Dorsolateral prefrontal cortex (tissue), 120 donors: ENCODE measurements at regions of chr1 and their contacts with region 1.

Region 1: GRCh38 chr1:40040511-40041465 is at the start of gene CAP1:
- DNase-seq: peak; percentile 96 to 100 (median 99)
- H3K4me3 ChIP-seq: peak within 1 kb of the TSS; percentile 77 to 100 (median 97)
- H3K27ac ChIP-seq: peak within 1 kb of the TSS; percentile 41 to 99 (median 94)
- H3K27me3 ChIP-seq: no peaks in the 10 kb centered on the region
- CTCF ChIP-seq: peak in 38 of 56 donors; percentile 7 to 58 (median 31)
- total RNA-seq, gene CAP1: 108 to 214 (median 152) TPM

Region 2: GRCh38 chr1:39816415-39817090 is 224.2 kb before region 1 on chr1:
- intact Hi-C with region 1: no loop called
- DNase-seq: peak in 9 of 10 donors; percentile 46 to 78 (median 64)
- H3K4me3 ChIP-seq: no peak overlapping the region
- H3K27ac ChIP-seq: no peak overlapping the region
- H3K27me3 ChIP-seq: no peaks in the 10 kb centered on the region
- CTCF ChIP-seq: peak; percentile 59 to 91 (median 84)

Region 3: DNA sequence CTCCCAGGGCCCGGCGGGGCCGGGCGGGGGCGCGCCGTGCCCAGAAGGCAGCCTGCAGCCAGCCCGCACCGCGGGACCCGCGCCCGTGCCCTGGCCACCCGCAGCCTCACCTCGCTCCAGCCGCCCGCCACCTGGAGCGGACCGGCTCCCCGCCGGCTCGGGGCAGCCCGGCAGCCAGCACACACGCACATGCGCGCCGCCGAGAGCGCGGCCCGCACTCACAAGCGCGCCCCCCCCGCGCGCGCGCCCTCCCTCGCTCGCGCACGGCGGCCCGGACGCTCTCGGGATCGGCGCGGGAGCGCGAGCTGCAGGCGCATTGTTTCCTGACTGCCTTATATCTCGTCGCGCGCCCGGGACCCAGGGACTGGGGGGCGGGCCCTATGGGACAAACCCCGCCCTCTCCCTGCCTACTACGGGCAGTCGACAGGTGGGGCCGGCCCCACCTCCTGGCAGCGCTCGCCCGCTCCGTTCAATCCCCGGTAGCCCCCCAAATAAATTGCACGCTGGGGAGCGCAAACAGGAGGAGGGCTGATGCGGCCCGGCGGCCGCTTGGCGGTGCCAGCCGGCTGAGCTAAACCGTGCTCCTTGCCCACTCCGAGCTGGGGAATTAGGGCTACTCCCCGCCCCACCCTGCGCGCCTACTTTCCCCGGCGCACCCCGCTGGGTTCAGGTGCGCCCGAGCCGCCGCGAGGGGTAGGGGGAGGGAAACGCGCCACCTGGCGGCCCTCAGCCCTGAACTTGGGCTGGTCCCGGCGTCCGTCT is 138.9 kb before region 1 on chr1 and contains the start of gene MYCL:
- intact Hi-C with region 1: loop called (anchors 10 kb)
- DNase-seq: peak; percentile 59 to 82 (median 78)
- H3K4me3 ChIP-seq: peak within 1 kb of the TSS; percentile 57 to 88 (median 75)
- H3K27ac ChIP-seq: peak within 1 kb of the TSS in 31 of 59 donors; percentile 0 to 78 (median 42)
- H3K27me3 ChIP-seq: no peaks in the 10 kb centered on the region
- CTCF ChIP-seq: peak in 55 of 56 donors; percentile 45 to 86 (median 70)
- total RNA-seq, gene MYCL: 0.88 to 5.6 (median 2.3) TPM

Region 4: DNA sequence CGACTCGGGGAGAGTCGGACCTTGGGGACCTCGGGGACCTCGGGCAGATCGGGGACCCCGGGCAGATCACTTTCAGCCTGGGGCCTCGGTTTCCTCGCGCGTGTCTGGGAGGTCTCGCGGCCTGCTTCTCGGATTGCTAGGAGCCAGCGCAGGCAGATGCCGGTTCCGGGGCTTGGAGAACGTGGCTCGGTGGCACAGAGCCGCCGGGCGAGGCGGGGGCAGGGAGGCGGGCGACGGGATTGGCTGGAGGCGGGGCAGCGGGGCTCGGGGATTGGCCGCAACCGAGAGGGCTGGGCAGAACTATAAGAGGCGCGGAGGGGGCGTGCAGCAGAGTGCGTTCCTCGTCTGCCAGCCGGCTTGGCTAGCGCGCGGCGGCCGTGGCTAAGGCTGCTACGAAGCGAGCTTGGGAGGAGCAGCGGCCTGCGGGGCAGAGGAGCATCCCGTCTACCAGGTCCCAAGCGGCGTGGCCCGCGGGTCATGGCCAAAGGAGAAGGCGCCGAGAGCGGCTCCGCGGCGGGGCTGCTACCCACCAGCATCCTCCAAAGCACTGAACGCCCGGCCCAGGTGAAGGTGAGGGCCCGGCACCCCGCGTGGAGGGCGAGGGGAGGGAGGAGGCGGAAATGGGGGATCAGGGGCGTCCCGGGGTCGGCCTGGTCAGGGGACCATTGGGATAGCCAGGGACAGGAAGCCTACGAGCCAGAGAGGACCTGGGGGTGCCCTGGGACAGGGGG is 85.8 kb before region 1 on chr1 and contains the start of gene MFSD2A:
- intact Hi-C with region 1: loop called in 1 of 2 experiments (anchors 10 kb)
- DNase-seq: peak; percentile 88 to 98 (median 94)
- H3K4me3 ChIP-seq: peak within 1 kb of the TSS; percentile 47 to 90 (median 72)
- H3K27ac ChIP-seq: peak within 1 kb of the TSS in 56 of 59 donors; percentile 31 to 93 (median 75)
- H3K27me3 ChIP-seq: no peaks in the 10 kb centered on the region
- CTCF ChIP-seq: peak in 7 of 56 donors; percentile 10 to 43 (median 16)
- total RNA-seq, gene MFSD2A: 6.7 to 62.3 (median 20.8) TPM

Region 5: GRCh38 chr1:40096977-40097782 is 56.4 kb after region 1 on chr1 and contains the start of gene PPT1:
- intact Hi-C with region 1: loop called (anchors 2 to 5 kb)
- DNase-seq: peak; percentile 79 to 92 (median 87)
- H3K4me3 ChIP-seq: peak within 1 kb of the TSS; percentile 58 to 97 (median 81)
- H3K27ac ChIP-seq: peak within 1 kb of the TSS; percentile 66 to 97 (median 85)
- H3K27me3 ChIP-seq: no peaks in the 10 kb centered on the region
- CTCF ChIP-seq: peak in 52 of 56 donors; percentile 7 to 66 (median 40)
- total RNA-seq, gene PPT1: 72.4 to 166 (median 118) TPM

Region 6: GRCh38 chr1:40224040-40224439 is 183.3 kb after region 1 on chr1:
- intact Hi-C with region 1: no loop called
- DNase-seq: no peak
- H3K4me3 ChIP-seq: no peak overlapping the region
- H3K27ac ChIP-seq: no peak overlapping the region
- H3K27me3 ChIP-seq: no peaks in the 10 kb centered on the region
- CTCF ChIP-seq: no peak

Region 7: DNA sequence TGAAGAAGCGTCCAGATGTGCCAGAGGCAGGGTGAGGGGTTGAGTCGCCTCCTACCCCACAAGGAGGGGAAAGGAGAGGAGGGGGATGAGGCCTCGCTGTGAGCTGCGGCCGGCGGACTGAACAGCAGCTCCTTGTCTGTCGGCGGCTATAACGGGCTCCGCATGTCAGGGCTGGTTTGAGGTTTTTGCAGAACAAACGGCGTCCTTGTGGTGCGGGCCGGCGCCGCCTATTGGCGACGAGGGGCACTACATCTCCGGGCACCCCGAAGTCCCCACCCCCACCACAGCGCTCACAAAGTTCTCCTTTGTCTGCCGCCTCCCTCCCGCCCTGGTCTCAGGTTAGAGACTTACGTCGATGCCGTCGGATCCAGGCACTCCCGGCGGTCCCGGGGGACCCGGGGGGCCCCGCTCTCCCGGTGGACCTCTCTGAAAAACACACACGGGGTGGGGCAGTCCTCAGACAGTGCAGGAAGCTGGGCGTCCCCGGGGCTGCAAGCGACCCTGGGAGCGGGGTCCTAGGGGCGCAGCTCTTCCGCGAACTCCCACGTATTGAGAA is 274.5 kb after region 1 on chr1:
- intact Hi-C with region 1: loop called in 1 of 2 experiments (anchors 5 kb)
- DNase-seq: peak; percentile 61 to 91 (median 89)
- H3K4me3 ChIP-seq: peak overlapping the region; percentile 43 to 85 (median 66)
- H3K27ac ChIP-seq: peak overlapping the region; percentile 76 to 100 (median 98)
- H3K27me3 ChIP-seq: peaks cover 0 to 30% (median 13%) of the 10 kb centered on the region in 45 donors
- CTCF ChIP-seq: peak; percentile 69 to 98 (median 90)